ENCODE measurements at regions of chr7 and their contacts with region 1.

Region 1: DNA sequence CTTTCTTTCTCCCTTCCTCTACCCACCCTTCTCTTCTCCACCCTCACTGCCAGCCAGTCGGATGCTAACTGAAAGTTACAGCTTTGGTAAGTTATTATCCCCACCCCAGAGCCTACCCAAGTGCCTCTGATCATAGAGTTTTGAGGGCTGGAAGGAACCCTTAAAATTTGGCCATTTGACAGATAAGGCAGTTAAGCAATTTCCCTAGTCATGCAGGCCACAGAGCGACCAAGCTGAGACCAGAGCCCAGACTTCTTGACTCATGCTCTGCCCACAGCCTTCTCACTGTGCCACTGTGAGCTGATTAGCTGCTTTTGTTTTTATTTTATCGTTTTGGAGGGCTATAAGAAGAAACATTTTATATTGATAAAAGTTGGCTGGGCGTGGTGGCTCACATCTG is 17.2 kb downstream of the SAP25 start:
- DNase-seq: no peak
- ATAC-seq: no peak
- H3K4me3 ChIP-seq: no peak overlapping the region
- H3K27ac ChIP-seq: no peak overlapping the region
- H3K4me1 ChIP-seq: no peaks in the 10 kb centered on the region; the same call in 1 of the 2 replicates
- H3K27me3 ChIP-seq: no peaks in the 10 kb centered on the region
- CTCF ChIP-seq: no peak
- EP300 ChIP-seq: no peak
- POLR2A ChIP-seq: no peak
- RAD21 ChIP-seq: no peak

Region 2: GRCh38 chr7:100469227-100470044 is 87.1 kb before region 1 on chr7:
- CTCF ChIA-PET with region 1: interaction called, 50 read pairs
- POLR2A ChIA-PET with region 1: interaction called, 4 read pairs
- RAD21 ChIA-PET with region 1: interaction called, 24 read pairs
- SMC1A ChIA-PET with region 1: interaction called, 24 read pairs
- in situ Hi-C with region 1: loop called (anchors 5 kb)
- intact Hi-C with region 1: loop called (anchors 1 kb)
- DNase-seq: no peak
- ATAC-seq: peak; percentile 94
- H3K4me3 ChIP-seq: no peak overlapping the region
- H3K27ac ChIP-seq: no peak overlapping the region
- H3K4me1 ChIP-seq: peaks cover 12% of the 10 kb centered on the region
- H3K27me3 ChIP-seq: no peaks in the 10 kb centered on the region
- CTCF ChIP-seq: peak; percentile 95 to 96 (median 96)
- EP300 ChIP-seq: no peak
- POLR2A ChIP-seq: peak; percentile 63; the same call in 1 of the 2 replicates
- RAD21 ChIP-seq: peak; percentile 85

Region 3: DNA sequence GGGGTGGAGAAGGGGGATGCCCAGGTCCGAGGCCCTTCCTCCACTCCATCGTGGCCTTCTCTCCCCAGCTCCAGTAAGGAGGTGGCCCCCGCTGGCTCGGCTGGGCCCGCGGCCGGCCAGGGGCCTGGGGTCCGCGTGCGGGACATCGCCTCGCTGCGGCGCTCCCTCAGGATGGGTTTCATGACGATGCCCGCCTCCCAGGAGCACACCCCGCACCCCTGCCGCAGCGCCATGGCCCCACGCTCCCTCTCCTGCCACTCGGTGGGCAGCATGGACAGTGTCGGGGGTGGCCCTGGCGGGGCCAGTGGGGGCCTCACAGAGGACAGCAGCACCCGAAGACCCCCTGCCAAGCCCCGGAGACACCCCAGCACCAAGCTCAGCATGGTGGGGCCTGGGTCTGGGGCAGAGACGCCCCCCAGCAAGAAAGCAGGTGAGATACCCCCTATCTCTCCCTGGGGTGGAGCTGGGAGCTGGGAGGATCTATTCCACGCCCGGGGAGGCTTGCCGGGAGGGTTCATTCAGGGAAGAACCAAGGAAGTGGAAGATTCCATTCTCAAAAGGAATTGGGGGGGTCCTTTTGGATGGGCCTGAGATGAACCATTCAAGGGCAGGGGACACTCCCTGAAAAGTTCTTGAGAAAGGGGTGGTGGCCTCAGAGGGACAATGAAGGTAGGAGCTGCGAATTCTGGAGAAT is 69.6 kb before region 1 on chr7:
- CTCF ChIA-PET with region 1: interaction called, 49 read pairs
- POLR2A ChIA-PET with region 1: no interaction called
- RAD21 ChIA-PET with region 1: interaction called, 13 read pairs
- SMC1A ChIA-PET with region 1: interaction called, 4 read pairs
- in situ Hi-C with region 1: no loop called
- intact Hi-C with region 1: no loop called
- DNase-seq: no peak
- ATAC-seq: no peak
- H3K4me3 ChIP-seq: no peak overlapping the region
- H3K27ac ChIP-seq: no peak overlapping the region
- H3K4me1 ChIP-seq: peaks cover 7% of the 10 kb centered on the region
- H3K27me3 ChIP-seq: no peaks in the 10 kb centered on the region
- CTCF ChIP-seq: no peak
- EP300 ChIP-seq: no peak
- POLR2A ChIP-seq: no peak
- RAD21 ChIP-seq: no peak

Region 4: GRCh38 chr7:100516135-100516812 is 40.3 kb before region 1 on chr7:
- CTCF ChIA-PET with region 1: interaction called, 11 read pairs
- POLR2A ChIA-PET with region 1: interaction called, 5 read pairs
- RAD21 ChIA-PET with region 1: interaction called, 13 read pairs
- SMC1A ChIA-PET with region 1: interaction called, 4 read pairs
- in situ Hi-C with region 1: no loop called
- intact Hi-C with region 1: no loop called
- DNase-seq: peak; percentile 66
- ATAC-seq: peak; percentile 98
- H3K4me3 ChIP-seq: no peak overlapping the region
- H3K27ac ChIP-seq: peak overlapping the region; percentile 38
- H3K4me1 ChIP-seq: peaks cover 25% of the 10 kb centered on the region
- H3K27me3 ChIP-seq: no peaks in the 10 kb centered on the region
- CTCF ChIP-seq: no peak
- EP300 ChIP-seq: peak in 1 of 2 experiments; percentile 55; a peak in 1 of 4 replicates
- POLR2A ChIP-seq: no peak
- RAD21 ChIP-seq: no peak

Region 5: GRCh38 chr7:100538654-100539435 is 17.7 kb before region 1 on chr7 and contains the start of gene AGFG2:
- CTCF ChIA-PET with region 1: interaction called, 101 read pairs
- POLR2A ChIA-PET with region 1: interaction called, 8 read pairs
- RAD21 ChIA-PET with region 1: interaction called, 90 read pairs
- SMC1A ChIA-PET with region 1: interaction called, 127 read pairs
- in situ Hi-C with region 1: no loop called
- intact Hi-C with region 1: no loop called
- DNase-seq: peak; percentile 98
- ATAC-seq: peak; percentile 96
- H3K4me3 ChIP-seq: peak within 1 kb of the TSS; percentile 85
- H3K27ac ChIP-seq: peak within 1 kb of the TSS; percentile 67
- H3K4me1 ChIP-seq: peaks cover 21% of the 10 kb centered on the region
- H3K27me3 ChIP-seq: no peaks in the 10 kb centered on the region
- CTCF ChIP-seq: no peak
- EP300 ChIP-seq: no peak
- POLR2A ChIP-seq: peak; percentile 90
- RAD21 ChIP-seq: 0 out of 2 replicates have a peak, but pooled peaks have one; percentile 8
- polyA plus RNA-seq, gene AGFG2: 0.90 to 1.1 TPM

Region 6: GRCh38 chr7:100586266-100587025 is 29.9 kb after region 1 on chr7 and contains the start of gene FBXO24:
- CTCF ChIA-PET with region 1: interaction called, 190 read pairs
- POLR2A ChIA-PET with region 1: interaction called, 5 read pairs
- RAD21 ChIA-PET with region 1: interaction called, 15 read pairs
- SMC1A ChIA-PET with region 1: interaction called, 19 read pairs
- in situ Hi-C with region 1: no loop called
- intact Hi-C with region 1: no loop called
- DNase-seq: peak; percentile 100
- ATAC-seq: peak; percentile 90
- H3K4me3 ChIP-seq: peak within 1 kb of the TSS; percentile 83
- H3K27ac ChIP-seq: peak within 1 kb of the TSS; percentile 88
- H3K4me1 ChIP-seq: peaks cover 24% of the 10 kb centered on the region
- H3K27me3 ChIP-seq: no peaks in the 10 kb centered on the region
- CTCF ChIP-seq: no peak
- EP300 ChIP-seq: 0 out of 4 replicates have a peak, but pooled peaks of 1 of the 2 experiments have one; percentile 3
- POLR2A ChIP-seq: peak; percentile 53; the same call in 1 of the 2 replicates
- RAD21 ChIP-seq: no peak
- polyA plus RNA-seq, gene FBXO24: not detected